ENCODE measurements at regions of chr6 and their contacts with region 1.

Region 1: DNA sequence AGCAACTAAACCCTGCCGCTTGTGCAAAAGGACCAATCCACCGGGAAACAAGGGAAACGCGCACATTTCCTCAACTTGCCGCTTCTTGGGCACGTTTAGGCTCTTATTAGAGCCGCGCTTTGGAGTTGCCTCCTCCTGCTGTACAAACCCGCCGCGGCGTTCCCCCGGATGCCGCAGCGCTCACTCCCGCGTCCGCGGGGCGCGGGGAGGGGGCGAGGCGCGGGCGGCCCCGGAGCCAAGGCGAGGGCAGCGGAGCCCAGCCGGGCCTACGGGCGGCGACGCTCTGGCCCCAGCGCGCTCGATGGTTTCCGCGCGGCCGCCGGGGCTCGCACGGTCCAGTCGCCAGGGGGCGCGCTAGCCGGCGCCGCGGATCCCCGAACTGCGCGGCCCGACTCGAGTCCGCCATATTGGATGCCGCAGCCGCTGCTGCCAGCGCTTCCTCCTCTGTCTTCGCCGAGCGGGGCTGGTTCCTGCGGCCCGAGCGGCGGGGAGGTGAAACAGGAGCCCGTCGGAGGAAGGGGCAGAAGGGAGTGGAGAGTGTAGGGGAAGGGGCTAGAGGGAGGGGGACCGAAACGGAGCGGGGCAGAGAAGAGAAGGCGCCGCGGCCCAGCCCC is at the start of gene SCAF8:
- DNase-seq: peak; percentile 83
- H3K4me3 Mint-ChIP-seq: peak within 1 kb of the TSS; percentile 85
- H3K27ac Mint-ChIP-seq: peak within 1 kb of the TSS; percentile 93
- H3K4me1 Mint-ChIP-seq: peaks cover 44% of the 10 kb centered on the region
- H3K27me3 Mint-ChIP-seq: no peaks in the 10 kb centered on the region
- total RNA-seq, gene SCAF8: 27.2 to 28.0 TPM

Region 2: GRCh38 chr6:152982768-152983636 is 1750.1 kb before region 1 on chr6 and contains the start of gene FBXO5:
- CTCF ChIA-PET with region 1: no interaction called
- intact Hi-C with region 1: loop called (anchors 2 kb)
- DNase-seq: peak; percentile 97
- H3K4me3 Mint-ChIP-seq: peak within 1 kb of the TSS; percentile 99
- H3K27ac Mint-ChIP-seq: peak within 1 kb of the TSS; percentile 100
- H3K4me1 Mint-ChIP-seq: peaks cover 44% of the 10 kb centered on the region
- H3K27me3 Mint-ChIP-seq: no peaks in the 10 kb centered on the region
- total RNA-seq, gene FBXO5: 61.4 to 62.3 TPM

Region 3: DNA sequence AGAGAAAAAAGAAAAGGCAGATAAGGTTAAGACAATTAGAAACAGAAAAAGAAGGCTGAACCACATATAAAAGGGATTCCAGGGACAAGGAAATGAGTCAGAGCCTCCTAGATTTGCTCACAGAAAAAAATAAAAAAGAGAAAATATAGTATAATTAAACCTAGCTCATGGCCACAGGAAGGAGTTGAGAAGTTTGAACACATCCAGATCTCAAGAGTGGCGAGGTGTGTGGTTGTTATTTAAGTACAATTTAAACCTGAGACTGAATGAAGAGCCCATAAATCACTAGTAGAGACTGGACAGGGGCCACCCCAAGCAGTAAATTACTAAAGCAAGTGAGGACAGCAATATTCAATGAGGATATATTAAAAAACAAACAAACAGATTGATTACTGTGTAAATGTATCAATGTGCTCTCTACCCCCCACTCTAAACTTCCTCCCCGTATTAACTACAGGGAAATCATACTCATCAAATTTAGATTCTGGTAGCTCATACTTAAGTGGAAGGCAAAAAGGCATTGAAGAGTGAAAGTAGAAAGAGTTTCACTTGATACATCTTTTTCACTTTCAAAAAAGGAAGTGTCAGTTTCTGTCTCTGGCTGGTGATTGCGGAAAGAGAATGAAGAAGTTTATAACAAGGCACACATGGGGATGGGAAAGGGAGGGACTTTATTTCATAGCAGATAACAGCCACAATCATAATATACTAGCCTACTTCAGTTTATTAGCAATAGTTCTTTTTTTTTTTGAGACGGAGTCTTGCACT is 49.2 kb before region 1 on chr6:
- CTCF ChIA-PET with region 1: interaction called, 3 read pairs
- intact Hi-C with region 1: loop called (anchors 2 kb)
- DNase-seq: no peak
- H3K4me3 Mint-ChIP-seq: no peak overlapping the region
- H3K27ac Mint-ChIP-seq: no peak overlapping the region
- H3K4me1 Mint-ChIP-seq: peaks cover 14% of the 10 kb centered on the region
- H3K27me3 Mint-ChIP-seq: no peaks in the 10 kb centered on the region

Region 4: DNA sequence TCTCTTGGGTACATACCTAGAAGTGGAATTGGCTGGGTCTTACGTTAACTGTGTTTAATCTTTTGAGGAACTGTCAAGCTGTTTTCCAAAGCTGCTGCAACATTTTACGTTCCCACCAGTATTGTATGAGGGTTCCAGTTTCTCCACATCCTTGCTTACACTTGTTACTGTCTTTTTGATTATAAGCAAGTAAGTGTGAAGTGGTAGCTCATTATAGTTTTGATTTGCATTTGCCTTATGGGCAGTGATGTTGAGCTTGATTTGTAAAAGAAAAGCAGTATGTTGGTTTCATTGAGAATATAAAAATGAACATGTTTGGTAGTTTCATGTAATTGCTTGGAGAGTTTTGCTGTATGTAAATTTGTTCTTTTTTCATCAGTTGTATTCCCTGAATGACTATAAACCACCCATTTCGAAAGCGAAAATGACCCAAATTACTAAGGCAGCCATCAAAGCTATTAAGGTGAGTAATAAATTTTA is 40.5 kb after region 1 on chr6:
- CTCF ChIA-PET with region 1: no interaction called
- intact Hi-C with region 1: loop called (anchors 1 kb)
- DNase-seq: peak; percentile 19
- H3K4me3 Mint-ChIP-seq: no peak overlapping the region
- H3K27ac Mint-ChIP-seq: peak overlapping the region; percentile 70
- H3K4me1 Mint-ChIP-seq: peaks cover 43% of the 10 kb centered on the region
- H3K27me3 Mint-ChIP-seq: no peaks in the 10 kb centered on the region

Region 5: DNA sequence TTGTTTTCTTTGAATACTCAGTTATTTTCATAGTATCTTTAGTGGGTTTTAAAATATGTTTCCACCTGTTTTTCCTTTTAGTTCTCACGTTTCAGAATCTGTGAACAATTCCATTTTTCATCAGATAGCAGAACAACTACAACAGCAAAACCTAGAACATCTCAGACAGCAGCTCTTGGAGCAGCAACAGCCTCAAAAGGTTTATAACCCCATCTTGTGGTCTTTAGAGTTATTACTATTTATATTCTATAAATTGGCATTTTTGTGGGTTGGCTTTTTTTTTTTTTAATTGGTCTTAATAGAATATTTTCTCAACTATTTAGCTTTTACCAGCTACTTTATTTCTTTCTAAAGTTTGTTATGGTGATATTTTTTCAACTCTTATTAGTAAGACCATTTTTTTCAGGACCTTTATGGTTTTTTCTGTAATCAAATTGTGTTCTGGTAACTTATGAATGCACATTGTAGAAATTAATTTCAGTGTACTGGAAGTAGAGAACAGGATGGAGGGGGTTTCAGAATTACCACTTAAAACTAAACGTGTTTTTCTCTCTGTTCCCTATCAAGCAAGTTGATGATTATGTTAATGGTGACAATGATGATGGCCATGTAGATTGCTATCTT is 72.3 kb after region 1 on chr6:
- CTCF ChIA-PET with region 1: no interaction called
- intact Hi-C with region 1: loop called (anchors 1 kb)
- DNase-seq: no peak
- H3K4me3 Mint-ChIP-seq: no peak overlapping the region
- H3K27ac Mint-ChIP-seq: no peak overlapping the region
- H3K4me1 Mint-ChIP-seq: peaks cover 6% of the 10 kb centered on the region
- H3K27me3 Mint-ChIP-seq: no peaks in the 10 kb centered on the region

Region 6: DNA sequence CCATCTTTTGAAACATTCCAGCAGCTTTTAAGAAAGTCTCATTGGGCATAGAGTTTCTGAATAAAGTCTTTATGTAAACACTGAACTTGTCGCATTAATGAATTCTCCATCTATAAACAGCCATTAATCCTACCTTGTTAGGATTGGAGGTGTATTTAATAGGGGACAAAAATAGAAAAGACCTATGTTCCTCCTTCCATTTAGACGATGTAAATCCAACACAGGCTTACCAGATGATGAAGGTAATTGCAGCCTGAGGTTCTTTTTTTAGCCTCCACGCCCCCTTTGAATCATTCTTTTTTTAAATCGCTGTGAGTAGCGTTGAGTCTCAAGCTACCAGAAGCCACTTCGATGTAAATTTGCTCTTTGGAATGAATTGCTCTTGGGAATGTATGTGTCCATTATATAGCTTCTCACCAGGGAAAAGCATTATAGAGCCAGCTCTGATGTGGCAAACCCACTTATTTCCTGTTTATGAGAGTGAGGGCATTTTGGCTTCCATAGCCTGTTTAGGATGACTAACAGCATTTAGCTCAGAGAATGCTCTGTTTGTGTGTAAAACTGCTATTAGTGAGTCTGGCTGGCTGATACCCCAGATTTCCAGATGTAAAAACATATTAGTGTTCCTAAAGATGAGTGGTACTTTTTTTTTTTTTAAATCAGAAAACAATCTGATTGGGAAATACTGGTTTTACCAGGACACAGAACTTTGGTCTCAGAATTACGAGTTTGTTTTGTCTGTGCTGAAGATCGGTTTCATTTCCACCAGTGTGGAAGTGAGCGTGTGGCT is 455.8 kb after region 1 on chr6:
- CTCF ChIA-PET with region 1: no interaction called
- intact Hi-C with region 1: loop called (anchors 5 kb)
- DNase-seq: no peak
- H3K4me3 Mint-ChIP-seq: no peak overlapping the region
- H3K27ac Mint-ChIP-seq: no peak overlapping the region
- H3K4me1 Mint-ChIP-seq: peaks cover 50% of the 10 kb centered on the region
- H3K27me3 Mint-ChIP-seq: no peaks in the 10 kb centered on the region